ENCODE measurements at regions of chr12 and their contacts with region 1.

Region 1: DNA sequence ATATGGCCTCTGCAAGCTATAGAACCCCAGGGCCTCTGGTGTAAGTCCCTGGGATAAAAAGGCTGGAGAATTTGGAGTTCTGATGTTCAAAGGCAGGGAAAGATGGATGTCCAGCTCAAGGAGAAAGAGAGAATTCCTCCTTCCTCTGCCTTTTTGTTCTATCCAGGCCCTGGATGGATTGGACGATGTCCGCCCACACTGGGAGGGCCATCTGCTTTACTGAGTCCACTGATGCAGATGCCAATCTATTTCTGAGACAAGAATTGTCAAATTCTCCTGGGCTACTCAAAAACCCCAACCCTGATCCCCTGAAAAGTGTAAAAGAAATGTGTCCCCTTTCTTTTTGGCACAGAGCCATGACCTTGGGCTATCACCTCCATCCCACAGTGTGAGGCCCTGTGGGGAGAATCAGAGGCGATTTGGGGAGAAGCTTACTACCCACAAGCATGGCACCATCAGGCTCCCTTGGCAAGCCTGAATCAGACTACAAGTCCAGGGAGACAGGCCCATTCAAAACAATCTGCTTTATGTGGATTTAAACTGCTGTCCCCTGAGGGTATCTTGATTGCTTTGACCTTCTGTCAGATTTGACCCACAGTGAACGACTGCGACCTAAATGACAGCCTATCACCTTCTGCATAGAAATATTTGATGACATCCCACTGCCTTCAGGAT is 334.0 kb downstream of the NUAK1 start:
- DNase-seq: no peak
- H3K4me3 ChIP-seq: no peak overlapping the region
- H3K27ac ChIP-seq: no peak overlapping the region
- H3K4me1 ChIP-seq: no peaks in the 10 kb centered on the region
- H3K27me3 ChIP-seq: no peaks in the 10 kb centered on the region
- CTCF ChIP-seq: no peak
- EP300 ChIP-seq: no peak
- POLR2A ChIP-seq: no peak

Region 2: GRCh38 chr12:105793421-105793820 is 11.3 kb before region 1 on chr12:
- intact Hi-C with region 1: loop called (anchors 1 kb)
- DNase-seq: no peak
- H3K4me3 ChIP-seq: no peak overlapping the region
- H3K27ac ChIP-seq: no peak overlapping the region
- H3K4me1 ChIP-seq: no peaks in the 10 kb centered on the region
- H3K27me3 ChIP-seq: no peaks in the 10 kb centered on the region
- CTCF ChIP-seq: no peak
- EP300 ChIP-seq: no peak
- POLR2A ChIP-seq: no peak

Region 3: GRCh38 chr12:105831372-105831771 is 26.6 kb after region 1 on chr12:
- intact Hi-C with region 1: no loop called
- DNase-seq: no peak
- H3K4me3 ChIP-seq: no peak overlapping the region
- H3K27ac ChIP-seq: no peak overlapping the region
- H3K4me1 ChIP-seq: no peaks in the 10 kb centered on the region
- H3K27me3 ChIP-seq: no peaks in the 10 kb centered on the region
- CTCF ChIP-seq: no peak
- EP300 ChIP-seq: no peak
- POLR2A ChIP-seq: no peak

Measured in sigmoid colon (tissue), 7 donors.